ENCODE measurements at regions of chr10 and their contacts with region 1.

Region 1: GRCh38 chr10:42552493-42553407 is 85.6 kb downstream of the ZNF33B start:
- DNase-seq: peak; percentile 82 to 97
- ATAC-seq: peak; percentile 91 to 98 (median 95)
- H3K4me3 ChIP-seq: peak overlapping the region; percentile 59
- H3K4me3 Mint-ChIP-seq: peak overlapping the region; percentile 95
- H3K27ac ChIP-seq: peak overlapping the region; percentile 65
- H3K27ac Mint-ChIP-seq: peak overlapping the region; percentile 91 to 100
- H3K4me1 ChIP-seq: peaks cover 19% of the 10 kb centered on the region
- H3K4me1 Mint-ChIP-seq: peaks cover 36 to 43% of the 10 kb centered on the region in 2 donors
- H3K27me3 ChIP-seq: no peaks in the 10 kb centered on the region
- H3K27me3 Mint-ChIP-seq: peaks cover 0 to 3% of the 10 kb centered on the region in 2 donors
- CTCF ChIP-seq: no peak

Region 2: GRCh38 chr10:42475168-42476098 is 77.3 kb before region 1 on chr10:
- intact Hi-C with region 1: no loop called
- DNase-seq: no peak
- ATAC-seq: no peak
- H3K4me3 ChIP-seq: no peak overlapping the region
- H3K4me3 Mint-ChIP-seq: no peak overlapping the region
- H3K27ac ChIP-seq: no peak overlapping the region
- H3K27ac Mint-ChIP-seq: no peak overlapping the region
- H3K4me1 ChIP-seq: no peaks in the 10 kb centered on the region
- H3K4me1 Mint-ChIP-seq: no peaks in the 10 kb centered on the region
- H3K27me3 ChIP-seq: peaks cover 7% of the 10 kb centered on the region
- H3K27me3 Mint-ChIP-seq: peaks cover 14 to 29% of the 10 kb centered on the region in 2 donors
- CTCF ChIP-seq: no peak

Region 3: GRCh38 chr10:42638055-42638820 is 85.5 kb after region 1 on chr10 and contains the start of gene ZNF33B:
- intact Hi-C with region 1: loop called (anchors 1 kb)
- DNase-seq: peak; percentile 64 to 97
- ATAC-seq: peak; percentile 88 to 95 (median 92)
- H3K4me3 ChIP-seq: peak within 1 kb of the TSS; percentile 84
- H3K4me3 Mint-ChIP-seq: peak within 1 kb of the TSS; percentile 95
- H3K27ac ChIP-seq: peak within 1 kb of the TSS; percentile 92
- H3K27ac Mint-ChIP-seq: peak within 1 kb of the TSS; percentile 88 to 95
- H3K4me1 ChIP-seq: peaks cover 7% of the 10 kb centered on the region
- H3K4me1 Mint-ChIP-seq: peaks cover 25 to 31% of the 10 kb centered on the region in 2 donors
- H3K27me3 ChIP-seq: no peaks in the 10 kb centered on the region
- H3K27me3 Mint-ChIP-seq: peaks cover 0 to under 1% of the 10 kb centered on the region in 2 donors
- CTCF ChIP-seq: no peak
- total RNA-seq, gene ZNF33B: 14.8 to 25.6 (median 17.8) TPM

Region 4: DNA sequence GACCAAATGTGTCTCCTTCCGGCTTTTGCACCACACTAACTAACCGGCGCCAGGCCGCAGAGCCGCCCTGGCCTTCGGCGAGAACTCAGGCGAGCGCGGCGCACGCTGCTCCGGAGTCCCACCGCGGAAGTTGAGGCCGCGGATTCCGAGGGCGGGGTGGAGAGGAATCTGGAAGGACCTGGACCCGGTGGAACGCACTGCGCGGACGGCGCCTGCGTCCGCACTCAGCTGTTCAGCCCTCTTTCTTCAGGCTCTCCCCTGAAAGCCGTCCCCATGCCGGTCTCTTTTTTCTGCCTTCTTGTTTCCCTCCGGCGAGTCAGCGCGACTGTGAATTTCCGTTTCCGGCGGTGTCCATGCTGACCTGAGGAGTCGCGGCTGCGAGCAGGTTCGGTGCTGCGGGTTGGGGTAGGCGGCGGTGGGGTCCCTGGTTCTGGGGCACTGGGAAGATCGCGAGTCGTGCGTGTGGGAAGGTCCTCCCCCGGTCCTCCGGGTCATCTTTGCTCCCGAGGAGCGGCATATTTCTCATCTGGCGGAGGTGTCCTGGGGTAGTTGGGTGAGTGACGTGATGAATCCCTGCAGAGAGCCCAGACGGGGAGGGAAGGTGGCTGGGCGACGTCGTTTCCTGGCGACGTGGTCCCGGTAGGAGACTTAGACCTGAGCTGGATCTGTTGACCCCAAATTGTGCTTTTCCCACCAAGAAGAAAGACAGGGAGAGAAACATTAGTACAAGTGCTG is 229.9 kb after region 1 on chr10 and contains the start of gene BMS1:
- intact Hi-C with region 1: loop called (anchors 2 kb)
- DNase-seq: peak; percentile 82 to 92
- ATAC-seq: peak; percentile 89 to 94 (median 94)
- H3K4me3 ChIP-seq: peak within 1 kb of the TSS; percentile 85
- H3K4me3 Mint-ChIP-seq: peak within 1 kb of the TSS; percentile 97
- H3K27ac ChIP-seq: peak within 1 kb of the TSS; percentile 87
- H3K27ac Mint-ChIP-seq: peak within 1 kb of the TSS; percentile 93 to 96
- H3K4me1 ChIP-seq: peaks cover 13% of the 10 kb centered on the region
- H3K4me1 Mint-ChIP-seq: peaks cover 12 to 30% of the 10 kb centered on the region in 2 donors
- H3K27me3 ChIP-seq: no peaks in the 10 kb centered on the region
- H3K27me3 Mint-ChIP-seq: peaks cover 4 to 12% of the 10 kb centered on the region in 2 donors
- CTCF ChIP-seq: no peak
- total RNA-seq, gene BMS1: 10.4 to 12.1 (median 11.9) TPM

Measured in natural killer cell (primary cell).